H1 (cell line): ENCODE measurements at regions of chr10 and their contacts with region 1.

Region 1: DNA sequence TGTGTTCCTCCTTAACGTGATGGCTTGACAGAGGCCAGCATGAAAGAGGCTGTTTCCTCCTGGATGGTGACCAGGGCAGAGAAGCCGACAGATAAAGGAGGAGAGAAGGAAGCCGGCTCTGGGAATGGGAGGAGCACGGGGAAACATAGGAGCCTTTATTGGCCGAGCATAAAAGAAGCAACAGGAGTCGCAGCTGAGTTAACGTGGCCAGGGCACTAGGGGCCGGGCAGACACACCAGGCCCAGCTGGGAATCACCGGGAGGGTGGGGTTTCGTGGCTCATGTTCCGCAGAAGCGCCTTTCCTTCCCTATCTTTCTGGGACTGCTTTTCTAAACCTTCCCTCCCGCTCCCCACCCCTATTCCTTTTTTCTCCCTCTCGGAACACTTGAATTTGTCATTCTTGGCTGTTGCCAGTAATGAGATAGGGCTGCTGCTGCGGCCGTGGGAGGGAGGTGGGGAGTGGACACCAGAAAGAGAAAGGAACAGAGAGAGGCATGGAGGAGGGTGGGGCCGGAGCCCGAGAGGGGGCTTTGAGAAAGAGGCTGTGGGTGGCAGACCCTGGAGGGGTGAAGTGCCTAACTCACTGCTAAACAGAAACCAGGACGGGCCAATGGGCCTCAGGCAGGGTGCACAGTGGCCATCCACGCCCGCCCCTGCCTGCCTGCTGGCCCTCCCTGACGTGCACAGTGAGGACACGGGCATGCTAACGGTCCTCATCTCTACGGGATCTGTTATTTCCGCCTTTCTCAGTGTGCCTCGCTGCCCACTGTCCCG is 65.2 kb downstream of the COL13A1 start:
- DNase-seq: peak in 1 of 2 experiments; percentile 73
- H3K4me3 ChIP-seq: peak overlapping the region in 1 of 4 experiments; percentile 19; a peak in 1 of 8 replicates
- H3K27ac ChIP-seq: peak overlapping the region; percentile 58; the same call in 1 of the 2 replicates
- H3K4me1 ChIP-seq: peaks cover 13 to 57% (median 40%) of the 10 kb centered on the region in 4 experiments
- H3K27me3 ChIP-seq: no peaks in the 10 kb centered on the region; a peak in 1 of 7 replicates
- CTCF ChIP-seq: no peak
- EP300 ChIP-seq: no peak
- POLR2A ChIP-seq: peak in 1 of 2 experiments; percentile 11; a peak in 1 of 3 replicates
- RAD21 ChIP-seq: no peak

Region 2: GRCh38 chr10:69839696-69840345 is 27.1 kb before region 1 on chr10:
- CTCF ChIA-PET with region 1: interaction called, 128 read pairs
- POLR2A ChIA-PET with region 1: interaction called, 3 read pairs
- DNase-seq: no peak
- H3K4me3 ChIP-seq: no peak overlapping the region
- H3K27ac ChIP-seq: no peak overlapping the region
- H3K4me1 ChIP-seq: peaks cover 8 to 31% (median 21%) of the 10 kb centered on the region in 4 experiments
- H3K27me3 ChIP-seq: peaks cover 0 to 2% (median 0%) of the 10 kb centered on the region in 4 experiments; a peak in 1 of 7 replicates
- CTCF ChIP-seq: no peak
- EP300 ChIP-seq: no peak
- POLR2A ChIP-seq: no peak
- RAD21 ChIP-seq: no peak

Region 3: DNA sequence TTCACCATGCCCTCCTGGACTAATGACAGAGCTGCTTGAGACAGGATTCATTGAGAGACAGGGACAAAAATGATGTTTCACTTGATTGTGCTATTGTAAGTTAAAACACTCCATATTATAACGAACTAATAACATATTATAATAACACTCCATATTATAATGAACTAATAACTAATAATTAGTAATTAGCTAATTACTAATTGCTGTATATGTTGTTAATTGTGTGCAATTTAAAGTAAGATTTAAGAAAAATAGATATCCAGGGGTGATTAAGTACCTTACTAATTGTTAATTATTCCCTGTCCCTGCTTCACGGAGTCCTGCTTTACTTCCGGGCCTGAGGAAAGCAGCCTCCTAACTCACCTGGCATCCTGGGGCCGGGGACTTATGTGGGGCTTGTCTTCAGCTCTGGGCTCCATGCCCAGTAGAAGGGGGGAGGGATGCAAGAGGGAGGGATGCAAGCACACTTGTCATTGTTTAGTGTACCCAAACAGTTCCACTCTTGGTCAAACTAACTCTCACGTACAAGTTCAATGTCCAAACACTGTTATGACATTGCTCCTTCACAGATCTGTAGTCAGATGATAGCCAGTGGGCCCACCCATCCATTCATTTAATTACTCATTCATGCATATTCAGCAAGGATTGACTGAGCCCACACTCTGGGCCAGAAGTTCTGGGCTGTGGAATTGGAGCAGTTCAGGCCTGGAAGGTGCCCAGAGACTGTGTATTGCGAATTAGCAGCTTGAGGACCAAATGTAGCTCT is 11.3 kb before region 1 on chr10:
- CTCF ChIA-PET with region 1: interaction called, 68 read pairs
- POLR2A ChIA-PET with region 1: interaction called, 5 read pairs
- DNase-seq: no peak
- H3K4me3 ChIP-seq: no peak overlapping the region
- H3K27ac ChIP-seq: no peak overlapping the region
- H3K4me1 ChIP-seq: peaks cover 8 to 26% (median 16%) of the 10 kb centered on the region in 4 experiments
- H3K27me3 ChIP-seq: no peaks in the 10 kb centered on the region; a peak in 1 of 7 replicates
- CTCF ChIP-seq: no peak
- EP300 ChIP-seq: no peak
- POLR2A ChIP-seq: no peak
- RAD21 ChIP-seq: no peak

Region 4: GRCh38 chr10:69878038-69878437 is 11.2 kb after region 1 on chr10:
- CTCF ChIA-PET with region 1: interaction called, 68 read pairs
- POLR2A ChIA-PET with region 1: interaction called, 6 read pairs
- DNase-seq: no peak
- H3K4me3 ChIP-seq: no peak overlapping the region
- H3K27ac ChIP-seq: no peak overlapping the region
- H3K4me1 ChIP-seq: peaks cover 9 to 41% (median 27%) of the 10 kb centered on the region in 4 experiments
- H3K27me3 ChIP-seq: no peaks in the 10 kb centered on the region; a peak in 3 of 7 replicates
- CTCF ChIP-seq: no peak
- EP300 ChIP-seq: no peak
- POLR2A ChIP-seq: no peak
- RAD21 ChIP-seq: no peak

Region 5: GRCh38 chr10:69885379-69886013 is 18.6 kb after region 1 on chr10:
- CTCF ChIA-PET with region 1: interaction called, 56 read pairs
- POLR2A ChIA-PET with region 1: interaction called, 3 read pairs
- DNase-seq: no peak
- H3K4me3 ChIP-seq: no peak overlapping the region
- H3K27ac ChIP-seq: no peak overlapping the region
- H3K4me1 ChIP-seq: peaks cover 0 to 10% (median 7%) of the 10 kb centered on the region in 4 experiments; a peak in 6 of 7 replicates
- H3K27me3 ChIP-seq: no peaks in the 10 kb centered on the region
- CTCF ChIP-seq: peak in 2 of 3 experiments; percentile 38 to 50; a peak in 2 of 4 replicates
- EP300 ChIP-seq: no peak
- POLR2A ChIP-seq: no peak
- RAD21 ChIP-seq: no peak; a peak in 1 of 4 replicates

Region 6: GRCh38 chr10:69901628-69902505 is 35.0 kb after region 1 on chr10:
- CTCF ChIA-PET with region 1: interaction called, 53 read pairs
- POLR2A ChIA-PET with region 1: interaction called, 3 read pairs
- DNase-seq: peak; percentile 31 to 71
- H3K4me3 ChIP-seq: no peak overlapping the region
- H3K27ac ChIP-seq: no peak overlapping the region
- H3K4me1 ChIP-seq: peaks cover 0 to 15% (median 7%) of the 10 kb centered on the region in 4 experiments; a peak in 3 of 7 replicates
- H3K27me3 ChIP-seq: no peaks in the 10 kb centered on the region
- CTCF ChIP-seq: peak; percentile 72 to 96 (median 89)
- EP300 ChIP-seq: no peak
- POLR2A ChIP-seq: no peak
- RAD21 ChIP-seq: peak; percentile 52 to 73